Caco-2 (cell line): ENCODE measurements at regions of chr13 and their contacts with region 1.

Region 1: GRCh38 chr13:53907891-53908290 is 879.3 kb downstream of the OLFM4 start:
- DNase-seq: no peak
- H3K4me3 ChIP-seq: no peak overlapping the region
- H3K4me3 Mint-ChIP-seq: no peak overlapping the region
- H3K27ac Mint-ChIP-seq: no peak overlapping the region
- H3K4me1 ChIP-seq: no peaks in the 10 kb centered on the region
- H3K4me1 Mint-ChIP-seq: no peaks in the 10 kb centered on the region
- H3K27me3 ChIP-seq: no peaks in the 10 kb centered on the region
- H3K27me3 Mint-ChIP-seq: peaks cover under 1% of the 10 kb centered on the region
- CTCF ChIP-seq: no peak

Region 2: DNA sequence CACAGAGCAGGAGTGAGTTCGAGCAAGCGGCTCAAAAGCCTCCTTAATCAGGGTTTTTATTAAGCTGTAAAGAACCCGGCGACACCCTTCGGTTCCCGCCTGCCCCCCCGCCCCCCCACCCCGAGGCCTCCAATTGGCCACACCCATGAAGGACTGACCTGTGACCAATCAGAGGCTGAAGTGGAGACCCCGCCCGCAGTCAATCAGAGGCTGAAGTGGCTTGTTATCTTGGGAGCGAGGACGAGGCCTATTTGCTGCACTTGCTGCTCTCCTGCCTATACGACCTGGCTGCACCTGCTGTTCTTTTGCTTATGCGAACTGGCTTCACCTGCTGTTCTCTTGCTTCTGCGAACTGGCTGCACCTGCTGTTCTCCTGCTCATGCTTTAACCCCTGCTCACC is 34.3 kb before region 1 on chr13:
- CTCF ChIA-PET with region 1: no interaction called
- POLR2A ChIA-PET with region 1: no interaction called
- intact Hi-C with region 1: loop called (anchors 2 kb)
- DNase-seq: peak; percentile 1 to 42
- H3K4me3 ChIP-seq: no peak overlapping the region
- H3K4me3 Mint-ChIP-seq: no peak overlapping the region
- H3K27ac Mint-ChIP-seq: no peak overlapping the region
- H3K4me1 ChIP-seq: no peaks in the 10 kb centered on the region
- H3K4me1 Mint-ChIP-seq: no peaks in the 10 kb centered on the region
- H3K27me3 ChIP-seq: no peaks in the 10 kb centered on the region
- H3K27me3 Mint-ChIP-seq: peaks cover 2% of the 10 kb centered on the region
- CTCF ChIP-seq: no peak